ENCODE measurements at regions of chr6 and their contacts with region 1.

Region 1: GRCh38 chr6:166344250-166344649 is 1.9 kb upstream of the SFT2D1 start:
- DNase-seq: no peak
- H3K4me3 ChIP-seq: no peak overlapping the region
- H3K27ac ChIP-seq: no peak overlapping the region
- H3K4me1 ChIP-seq: no peaks in the 10 kb centered on the region; a peak in 1 of 7 replicates
- H3K27me3 ChIP-seq: no peaks in the 10 kb centered on the region
- CTCF ChIP-seq: no peak
- EP300 ChIP-seq: no peak
- POLR2A ChIP-seq: no peak
- RAD21 ChIP-seq: no peak

Region 2: DNA sequence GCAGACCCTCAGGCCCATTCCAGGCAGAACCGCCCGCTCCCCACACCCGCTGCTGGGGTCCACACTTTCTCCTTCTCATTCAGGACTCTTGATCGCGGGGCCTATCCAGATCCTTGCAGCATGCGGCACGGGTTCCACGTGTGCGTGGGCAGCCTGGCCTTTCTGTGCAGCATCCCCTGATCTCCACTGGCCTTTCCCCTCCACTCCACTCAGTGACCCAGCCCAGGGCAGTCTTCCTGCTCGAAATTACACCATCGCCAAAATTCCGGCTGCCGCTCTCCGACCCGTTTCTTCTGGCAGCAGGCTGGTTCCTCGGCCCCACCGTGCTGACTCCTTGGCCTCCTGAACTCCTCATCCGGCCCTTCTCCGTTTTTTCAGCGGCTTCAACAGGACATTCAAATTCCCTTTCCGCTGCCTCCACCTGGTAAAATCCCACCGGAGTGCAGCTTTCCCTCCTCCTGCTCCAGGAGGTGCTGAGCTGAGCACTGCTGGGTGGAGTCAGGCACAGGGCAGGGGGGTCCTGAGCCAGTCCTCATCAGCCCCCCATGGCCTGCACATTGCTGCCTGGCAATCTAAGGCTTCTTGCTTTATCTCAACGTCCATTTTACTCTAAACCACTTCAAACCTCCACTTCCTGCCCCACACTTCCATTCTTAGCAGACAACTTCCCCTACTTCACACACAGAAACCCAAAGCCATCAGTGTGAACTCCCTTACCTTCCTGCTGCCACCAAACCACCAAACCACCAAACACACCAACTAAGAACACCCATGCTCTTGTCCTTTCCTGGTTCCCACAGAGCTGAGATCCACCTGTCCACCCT is 10.9 kb before region 1 on chr6:
- CTCF ChIA-PET with region 1: interaction called, 4 read pairs
- POLR2A ChIA-PET with region 1: interaction called, 10 read pairs
- DNase-seq: no peak
- H3K4me3 ChIP-seq: no peak overlapping the region
- H3K27ac ChIP-seq: no peak overlapping the region
- H3K4me1 ChIP-seq: peaks cover 0 to 6% (median 4%) of the 10 kb centered on the region in 4 experiments; a peak in 3 of 7 replicates
- H3K27me3 ChIP-seq: no peaks in the 10 kb centered on the region
- CTCF ChIP-seq: no peak
- EP300 ChIP-seq: no peak
- POLR2A ChIP-seq: no peak
- RAD21 ChIP-seq: no peak